Psoas muscle (tissue), 8 donors: ENCODE measurements at regions of chr19 and their contacts with region 1.

Region 1: DNA sequence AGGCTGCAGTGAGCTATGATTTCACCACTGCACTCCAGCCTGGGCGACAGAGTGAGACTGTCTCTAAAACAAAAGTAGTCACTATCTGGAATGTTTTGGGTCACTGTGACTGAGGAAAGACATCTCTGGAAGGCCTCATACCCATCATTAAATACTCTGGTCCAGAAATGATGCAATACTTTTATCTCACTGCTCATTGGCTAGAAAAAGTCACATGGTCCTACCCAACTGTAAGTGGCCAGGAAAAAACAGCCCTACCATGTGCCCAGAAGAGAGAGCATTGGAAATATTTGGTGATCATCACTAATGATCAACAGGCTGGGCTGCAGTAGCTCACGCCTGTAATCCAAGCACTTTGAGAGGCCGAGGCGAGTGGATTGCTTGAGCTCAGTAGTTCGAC is 29.8 kb downstream of the PNPLA6 start:
- DNase-seq: no peak
- ATAC-seq: no peak
- H3K4me3 ChIP-seq: no peak overlapping the region
- H3K27ac ChIP-seq: no peak overlapping the region
- H3K4me1 ChIP-seq: no peaks in the 10 kb centered on the region
- H3K27me3 ChIP-seq: no peaks in the 10 kb centered on the region
- CTCF ChIP-seq: no peak

Region 2: GRCh38 chr19:7674010-7675005 is 109.0 kb after region 1 on chr19:
- intact Hi-C with region 1: loop called in 1 of 2 experiments (anchors 5 kb)
- DNase-seq: peak; percentile 63 to 75
- ATAC-seq: peak in 3 of 4 donors; percentile 55 to 75 (median 73)
- H3K4me3 ChIP-seq: no peak overlapping the region
- H3K27ac ChIP-seq: no peak overlapping the region
- H3K4me1 ChIP-seq: no peaks in the 10 kb centered on the region
- H3K27me3 ChIP-seq: peaks cover 0 to 44% (median 12%) of the 10 kb centered on the region in 3 donors
- CTCF ChIP-seq: no peak